ENCODE measurements at regions of chr19 and their contacts with region 1.

Region 1: DNA sequence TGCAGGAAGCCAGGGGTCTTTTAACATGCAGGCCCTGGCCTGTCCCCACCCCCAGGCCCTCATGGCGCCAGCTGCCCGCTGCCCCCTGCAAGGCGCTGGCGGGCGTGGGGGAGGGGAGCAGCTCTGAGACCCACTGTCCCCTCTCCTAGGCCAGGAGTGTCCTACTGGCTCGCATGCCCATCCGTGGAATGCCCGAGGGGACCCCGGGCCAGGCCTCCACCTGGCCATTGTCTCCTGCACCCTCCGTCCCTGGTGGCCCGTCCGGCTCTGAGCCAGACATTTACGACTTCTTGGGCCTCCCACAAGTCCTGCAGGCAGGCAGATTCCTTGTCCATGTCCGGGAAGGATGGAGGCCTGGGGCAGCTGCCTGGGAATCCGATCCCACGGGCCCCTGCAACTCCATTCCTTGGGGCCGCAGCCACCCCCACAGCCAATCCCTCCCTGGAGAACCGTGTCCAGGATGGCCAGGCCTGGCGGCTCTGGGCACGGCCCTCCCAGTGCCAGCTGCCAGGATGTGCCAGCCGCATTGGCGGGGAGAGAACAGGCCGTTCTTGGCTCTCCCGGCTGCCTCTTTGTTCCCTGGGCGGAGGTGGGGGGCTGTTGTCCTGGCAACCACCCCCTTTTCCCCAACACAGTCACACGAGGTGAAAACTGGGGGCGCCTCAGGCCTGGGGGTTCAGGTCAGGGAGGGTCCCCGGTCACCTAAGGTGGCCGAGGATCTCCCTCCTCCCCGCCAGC is 10.5 kb upstream of the PLIN3 start:
- DNase-seq: peak; percentile 46 to 94 (median 91)
- H3K4me3 ChIP-seq: peak overlapping the region in 42 of 59 donors; percentile 2 to 57 (median 28)
- H3K27ac ChIP-seq: peak overlapping the region; percentile 93 to 100 (median 100)
- H3K27me3 ChIP-seq: no peaks in the 10 kb centered on the region
- CTCF ChIP-seq: peak in 3 of 56 donors; percentile 2 to 12 (median 7)

Region 2: DNA sequence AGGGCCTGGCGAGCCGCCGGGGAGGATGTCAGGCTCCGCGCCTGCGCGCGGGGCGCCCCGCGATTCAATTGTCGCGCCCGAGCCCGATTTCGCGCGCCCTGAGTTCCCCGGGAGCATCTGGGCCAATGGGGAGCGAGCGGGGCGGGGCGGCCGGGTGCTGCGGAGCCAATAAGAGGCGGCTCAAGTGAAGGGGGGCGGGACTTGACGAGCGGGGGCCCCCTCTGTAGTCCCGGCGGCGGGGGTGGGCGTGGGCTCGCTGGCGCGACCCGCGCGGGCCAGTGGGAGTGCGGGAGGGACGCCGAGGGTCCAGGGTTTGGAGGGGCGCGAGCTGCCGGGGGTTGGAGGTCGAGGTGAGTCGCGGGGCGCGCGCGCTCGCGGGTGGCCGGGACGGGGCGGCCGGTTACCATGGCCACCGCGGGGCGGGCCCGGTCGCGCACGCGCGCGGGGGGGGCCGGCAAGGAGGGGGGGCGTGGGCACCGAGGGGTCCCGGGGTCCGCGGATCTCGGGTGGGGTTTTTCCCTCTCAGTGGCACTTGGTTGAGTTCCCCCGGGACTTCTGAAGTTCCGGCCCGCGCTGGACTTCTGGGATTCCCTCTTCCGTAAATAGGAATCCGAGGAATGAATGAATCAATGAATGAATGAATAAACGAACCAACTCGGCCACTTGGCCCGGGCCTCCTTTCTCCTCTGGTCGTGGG is 32.1 kb after region 1 on chr19:
- intact Hi-C with region 1: loop called in 1 of 2 experiments (anchors 2 kb)
- DNase-seq: peak; percentile 88 to 95 (median 92)
- H3K4me3 ChIP-seq: peak overlapping the region; percentile 41 to 83 (median 71)
- H3K27ac ChIP-seq: peak overlapping the region in 50 of 59 donors; percentile 24 to 89 (median 74)
- H3K27me3 ChIP-seq: peaks cover 0 to 15% (median 0%) of the 10 kb centered on the region in 45 donors
- CTCF ChIP-seq: peak in 2 of 56 donors; percentile 4 to 28

Measured in dorsolateral prefrontal cortex (tissue), 120 donors.